ENCODE measurements at regions of chr6 and their contacts with region 1.

Region 1: DNA sequence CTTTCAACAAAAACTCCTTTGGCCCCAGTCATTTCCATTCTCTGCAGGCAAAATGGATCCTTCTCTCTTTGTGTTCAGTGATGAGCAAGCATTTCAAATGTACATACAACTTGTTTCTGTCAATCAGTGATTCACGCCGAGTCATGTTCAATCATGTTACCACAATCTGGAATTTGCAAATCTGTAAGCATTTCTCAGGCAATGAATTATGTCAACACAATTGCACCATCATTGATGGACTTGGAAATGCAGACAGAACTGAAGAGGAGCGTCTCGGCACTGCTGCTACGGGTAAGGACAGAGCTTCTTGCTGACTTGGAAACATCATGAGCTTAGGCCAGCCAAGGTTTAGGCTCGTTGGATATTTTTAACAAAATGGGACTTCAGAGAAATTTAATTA is 132.8 kb upstream of the AGPAT4 start:
- DNase-seq: peak in 1 of 2 experiments; percentile 70
- ATAC-seq: peak; percentile 60 to 85; a peak in 4 of 6 replicates
- H3K4me3 ChIP-seq: no peak overlapping the region
- H3K27ac ChIP-seq: peak overlapping the region; percentile 70 to 82
- H3K4me1 ChIP-seq: peaks cover 13% of the 10 kb centered on the region
- CTCF ChIP-seq: no peak
- EP300 ChIP-seq: peak; percentile 19 to 76; a peak in 2 of 5 replicates
- POLR2A ChIP-seq: no peak
- RAD21 ChIP-seq: no peak

Region 2: DNA sequence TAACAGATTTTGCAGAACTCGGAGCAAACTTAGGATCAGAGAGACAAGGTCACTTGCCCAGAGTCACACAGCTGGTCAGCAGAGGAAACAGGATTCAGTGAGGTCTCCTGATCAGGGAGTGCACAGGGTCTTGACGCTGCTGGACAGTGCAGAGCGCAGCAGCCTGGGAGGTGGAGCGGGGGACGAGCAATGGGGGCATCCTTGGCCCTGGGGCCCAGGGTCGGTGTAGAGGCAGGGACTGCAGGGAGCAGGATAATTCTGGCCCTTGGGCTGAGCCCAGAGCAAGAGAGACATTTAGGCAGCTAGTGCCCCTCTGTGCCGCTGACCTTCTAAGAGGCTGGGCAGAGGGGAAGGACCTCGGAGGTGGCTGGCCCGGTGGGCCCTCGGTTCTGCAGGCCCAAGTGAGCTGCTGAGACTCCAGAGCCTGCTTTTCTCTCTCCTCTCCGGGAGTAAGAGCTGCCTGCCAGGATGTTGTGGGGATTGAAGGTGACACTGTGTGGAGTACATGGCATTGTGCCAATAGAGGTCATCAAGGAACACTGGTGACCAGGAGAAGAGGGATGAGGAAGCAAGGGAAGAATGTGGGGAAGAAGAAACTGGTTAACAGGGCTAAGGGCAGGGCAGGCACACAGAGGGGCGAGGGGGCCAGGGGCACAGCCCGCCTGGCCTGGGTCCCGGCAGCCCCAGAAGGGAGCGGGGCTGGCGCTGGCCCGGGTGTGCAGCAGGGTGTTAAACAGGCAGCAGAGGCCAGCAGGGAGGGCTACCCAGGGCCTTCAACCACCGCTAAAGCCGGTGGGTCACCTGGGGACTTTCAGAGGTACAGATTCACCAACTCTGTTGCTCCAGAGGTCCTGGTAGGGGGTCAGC is 254.8 kb before region 1 on chr6:
- CTCF ChIA-PET with region 1: no interaction called
- POLR2A ChIA-PET with region 1: no interaction called
- DNase-seq: no peak
- ATAC-seq: no peak
- H3K4me3 ChIP-seq: no peak overlapping the region
- H3K27ac ChIP-seq: no peak overlapping the region
- H3K4me1 ChIP-seq: no peaks in the 10 kb centered on the region
- CTCF ChIP-seq: no peak
- EP300 ChIP-seq: no peak
- POLR2A ChIP-seq: no peak
- RAD21 ChIP-seq: no peak

Region 3: DNA sequence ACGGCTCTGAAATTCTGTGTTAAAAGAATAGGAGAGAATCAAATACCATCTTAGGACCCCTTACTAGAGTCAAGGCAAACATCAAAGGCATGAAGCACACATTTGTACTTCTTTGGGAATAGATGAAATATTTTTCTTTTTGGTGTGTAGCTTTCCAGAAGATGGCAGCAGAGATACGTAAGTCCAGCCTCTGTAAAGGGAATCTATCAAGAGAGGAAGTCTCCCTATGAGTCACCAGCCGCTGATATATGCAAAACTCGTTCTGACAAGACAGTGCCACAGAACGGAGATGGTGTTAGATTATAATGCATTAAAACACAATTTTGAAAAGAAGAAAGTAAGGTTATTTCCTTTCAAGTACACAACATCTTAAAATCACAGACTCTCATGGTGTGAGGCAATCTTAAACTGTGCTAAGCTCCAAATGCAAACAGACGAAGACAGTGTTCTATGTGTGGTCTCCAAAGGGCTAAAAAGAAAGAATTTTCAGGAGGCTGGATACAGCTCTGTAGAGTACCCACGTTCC is 12.7 kb before region 1 on chr6:
- CTCF ChIA-PET with region 1: interaction called, 11 read pairs
- POLR2A ChIA-PET with region 1: no interaction called
- DNase-seq: peak; percentile 67 to 79
- ATAC-seq: peak; percentile 93 to 98
- H3K4me3 ChIP-seq: no peak overlapping the region
- H3K27ac ChIP-seq: peak overlapping the region; percentile 49 to 76; a peak in 4 of 6 replicates
- H3K4me1 ChIP-seq: no peaks in the 10 kb centered on the region
- CTCF ChIP-seq: peak; percentile 82
- EP300 ChIP-seq: no peak
- POLR2A ChIP-seq: no peak
- RAD21 ChIP-seq: peak; percentile 83 to 85